ENCODE measurements at regions of chr1 and their contacts with region 1.

Region 1: DNA sequence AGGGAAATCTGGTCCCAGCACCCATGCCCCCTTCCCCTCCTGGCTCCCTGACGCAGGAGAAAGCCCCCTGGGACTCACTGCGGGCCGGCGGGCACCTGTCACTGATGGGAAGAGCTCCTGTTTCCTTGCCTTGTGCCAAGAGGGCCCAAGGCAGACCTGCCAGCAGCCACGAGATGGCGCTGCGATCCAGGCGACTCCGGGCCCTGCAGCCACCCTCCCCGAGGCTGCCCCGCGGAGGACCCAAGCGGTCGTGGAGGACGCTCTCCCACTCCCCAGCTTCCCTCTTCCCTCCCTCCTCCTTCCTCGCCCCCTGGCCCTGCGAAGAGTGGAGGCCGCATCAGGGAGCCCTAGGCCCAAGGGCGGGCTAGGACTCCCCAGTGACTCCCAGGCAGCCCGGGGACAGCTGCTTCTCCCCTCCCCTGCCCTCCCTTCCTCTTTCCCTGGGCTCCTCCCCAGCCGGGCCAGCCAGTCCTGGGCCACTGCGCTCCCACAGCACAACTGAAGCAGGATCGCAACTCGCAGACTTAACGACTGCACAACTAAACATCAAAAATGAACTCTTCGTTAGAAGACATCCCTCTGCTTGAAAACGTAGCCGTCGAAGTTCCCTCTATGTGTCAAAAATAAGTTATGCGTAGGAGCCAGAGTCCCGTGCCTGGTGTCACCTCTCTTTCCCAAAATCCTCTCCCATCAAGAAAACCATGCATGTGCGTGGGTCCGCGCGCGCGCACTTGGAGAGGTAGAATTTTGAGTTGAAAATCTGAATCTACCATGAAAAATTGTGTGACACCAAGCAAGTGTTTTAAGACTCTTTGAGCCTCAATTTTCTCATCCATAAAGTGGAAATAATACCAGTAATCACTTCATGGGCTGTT is 34.2 kb downstream of the BATF3 start:
- DNase-seq: peak; percentile 75
- H3K4me3 ChIP-seq: peak overlapping the region; percentile 24
- H3K27ac ChIP-seq: no peak overlapping the region
- H3K4me1 ChIP-seq: peaks cover 7% of the 10 kb centered on the region
- CTCF ChIP-seq: peak; percentile 85

Region 2: GRCh38 chr1:212760126-212760823 is 94.8 kb after region 1 on chr1:
- CTCF ChIA-PET with region 1: no interaction called
- POLR2A ChIA-PET with region 1: no interaction called
- intact Hi-C with region 1: loop called (anchors 5 kb)
- DNase-seq: peak; percentile 33
- H3K4me3 ChIP-seq: no peak overlapping the region
- H3K27ac ChIP-seq: no peak overlapping the region
- H3K4me1 ChIP-seq: peaks cover 5% of the 10 kb centered on the region
- CTCF ChIP-seq: peak; percentile 73

Region 3: DNA sequence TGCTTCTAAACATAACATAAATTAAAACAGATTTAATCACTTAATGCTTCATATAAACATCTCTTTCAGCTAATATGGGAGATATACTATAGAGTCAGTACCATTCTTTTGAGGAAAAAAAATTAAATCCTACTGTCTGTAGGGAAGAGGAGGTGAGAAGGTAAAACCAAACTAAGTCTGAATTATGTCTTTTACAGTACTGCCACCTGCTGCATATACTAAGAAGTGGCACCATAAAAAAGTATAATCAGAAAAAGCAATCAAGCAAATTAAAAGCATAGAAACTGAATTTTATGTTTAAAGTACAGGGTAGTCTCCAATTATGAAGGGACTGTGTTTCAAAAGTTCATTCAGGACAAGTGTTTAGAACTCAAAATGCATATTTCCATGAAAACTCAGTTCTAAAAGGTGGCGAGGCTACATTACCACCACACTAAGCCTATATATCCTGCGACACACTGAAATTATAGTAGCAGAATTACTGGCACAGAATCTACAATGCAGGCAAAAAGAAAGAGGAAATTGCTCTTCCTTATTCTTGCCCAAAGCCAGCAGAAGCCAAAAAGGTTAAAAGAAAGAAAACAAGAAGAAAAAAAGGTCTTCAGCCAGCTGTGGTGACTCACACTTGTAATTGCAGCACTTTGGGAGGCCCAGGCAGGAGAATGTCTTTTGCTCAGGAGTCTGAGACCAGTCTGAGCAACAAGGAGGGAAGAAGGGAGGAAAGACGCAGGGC is 117.1 kb after region 1 on chr1:
- CTCF ChIA-PET with region 1: no interaction called
- POLR2A ChIA-PET with region 1: interaction called, 3 read pairs
- intact Hi-C with region 1: loop called (anchors 1 kb)
- DNase-seq: peak; percentile 42
- H3K4me3 ChIP-seq: no peak overlapping the region
- H3K27ac ChIP-seq: no peak overlapping the region
- H3K4me1 ChIP-seq: no peaks in the 10 kb centered on the region
- CTCF ChIP-seq: peak; percentile 89